PC-9 (cell line): ENCODE measurements at regions of chr4 and their contacts with region 1.

Region 1: DNA sequence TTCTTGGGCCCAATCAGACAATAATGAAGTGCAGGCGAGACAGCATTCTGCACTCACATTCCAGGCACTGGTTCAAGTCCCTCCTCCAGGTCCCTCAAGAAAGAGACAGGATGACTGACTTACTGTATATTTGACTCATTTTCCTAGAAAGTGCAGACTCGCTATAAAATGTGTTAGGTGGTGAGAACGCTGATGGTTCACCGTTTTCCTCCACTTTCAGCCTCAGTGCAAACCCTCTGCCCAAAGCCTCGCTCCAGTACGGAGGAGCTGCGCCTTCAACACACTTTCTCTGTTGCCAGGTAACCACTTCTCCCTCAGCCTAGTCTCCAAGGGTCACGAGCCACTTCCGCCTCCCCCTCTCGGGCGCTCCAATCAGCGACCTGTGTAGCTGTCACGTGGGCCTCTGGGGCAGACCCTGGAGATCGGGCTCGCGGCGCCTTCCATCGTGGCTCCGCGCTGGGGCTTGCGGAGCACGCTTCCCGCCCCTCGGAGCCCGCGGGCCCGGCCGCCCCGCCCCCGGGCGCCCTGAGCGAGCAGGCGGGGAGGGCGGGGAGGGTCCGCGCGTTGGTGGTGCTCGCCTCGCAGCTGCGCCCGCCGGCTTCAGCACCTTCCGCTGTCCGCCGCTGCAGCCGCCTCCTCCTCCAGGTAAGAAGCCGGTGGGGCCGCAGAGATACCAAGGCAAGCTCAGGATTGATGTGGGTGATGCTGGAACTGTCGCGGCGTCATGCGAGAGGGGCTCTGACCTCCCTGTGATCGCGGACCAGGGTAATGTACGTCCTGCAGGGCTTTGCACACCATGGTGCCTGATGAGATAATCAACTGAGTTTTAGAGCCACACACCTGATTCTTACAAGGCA is at the start of gene WDR17:
- DNase-seq: peak; percentile 66 to 78
- H3K4me3 ChIP-seq: peak within 1 kb of the TSS; percentile 74
- H3K27ac ChIP-seq: no peak within 1 kb of the TSS
- H3K4me1 ChIP-seq: peaks cover 9% of the 10 kb centered on the region
- H3K27me3 ChIP-seq: no peaks in the 10 kb centered on the region
- CTCF ChIP-seq: no peak
- total RNA-seq, gene WDR17: 2.2 and 2.3 TPM in 2 replicates

Region 2: DNA sequence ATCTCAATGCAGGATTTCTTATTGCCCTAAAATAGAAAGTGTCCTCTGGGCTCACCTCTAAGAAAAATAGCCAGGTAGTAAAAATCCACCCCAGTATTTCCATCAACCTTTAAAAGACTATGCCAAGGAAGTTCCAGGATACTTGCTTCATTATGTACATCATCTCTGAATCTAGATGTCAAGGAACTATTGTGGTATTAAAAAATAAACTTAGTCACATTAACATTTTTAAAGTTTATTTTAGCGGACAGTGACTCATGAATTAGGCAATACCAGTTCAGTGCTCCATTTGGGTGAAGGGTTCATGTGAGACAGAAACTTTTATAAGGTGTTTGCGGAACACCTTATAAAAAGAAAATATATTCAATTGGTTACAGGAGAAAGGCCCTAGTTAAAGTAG is 938.3 kb before region 1 on chr4:
- CTCF ChIA-PET with region 1: no interaction called
- POLR2A ChIA-PET with region 1: no interaction called
- intact Hi-C with region 1: no loop called
- DNase-seq: peak in 1 of 2 experiments; percentile 39
- H3K4me3 ChIP-seq: no peak overlapping the region
- H3K27ac ChIP-seq: peak overlapping the region; percentile 25; the same call in 1 of the 2 replicates
- H3K4me1 ChIP-seq: peaks cover 16% of the 10 kb centered on the region
- H3K27me3 ChIP-seq: no peaks in the 10 kb centered on the region
- CTCF ChIP-seq: no peak

Region 3: DNA sequence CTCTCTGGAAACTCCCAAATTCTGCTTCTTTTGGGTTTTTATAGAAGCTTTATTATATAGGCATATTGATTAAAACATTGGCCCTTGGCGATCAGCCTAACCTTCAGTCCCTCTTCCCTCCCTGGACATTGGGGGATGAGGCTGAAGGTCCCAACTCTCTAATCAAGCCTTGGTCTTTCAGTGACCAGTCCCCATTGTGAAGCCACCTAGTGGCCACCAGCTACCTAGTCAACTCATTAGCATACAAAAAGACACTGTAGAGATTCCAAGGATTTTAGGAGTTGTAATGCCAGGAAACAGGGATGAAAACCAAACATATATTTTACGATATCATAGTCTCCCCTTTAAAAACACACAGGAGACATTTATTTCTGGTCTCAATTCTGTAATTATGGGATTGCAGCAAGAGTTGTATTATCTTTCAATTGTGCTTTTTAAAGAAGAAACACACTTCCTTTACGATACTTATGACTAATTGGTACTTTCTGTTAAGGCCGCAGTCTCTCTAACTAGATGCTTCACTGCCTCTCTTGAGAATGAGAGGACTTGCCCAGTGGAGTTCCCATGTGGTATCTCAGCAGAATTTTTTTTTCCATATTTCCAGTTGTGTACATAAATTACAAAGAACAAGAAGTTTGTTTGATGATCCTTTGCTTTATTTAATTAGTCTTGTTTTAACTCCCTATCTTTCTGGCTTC is 58.2 kb after region 1 on chr4:
- CTCF ChIA-PET with region 1: interaction called, 14 read pairs
- POLR2A ChIA-PET with region 1: no interaction called
- intact Hi-C with region 1: no loop called
- DNase-seq: peak in 1 of 2 experiments; percentile 2
- H3K4me3 ChIP-seq: no peak overlapping the region
- H3K27ac ChIP-seq: no peak overlapping the region
- H3K4me1 ChIP-seq: no peaks in the 10 kb centered on the region
- H3K27me3 ChIP-seq: no peaks in the 10 kb centered on the region
- CTCF ChIP-seq: peak; percentile 67; the same call in 1 of the 2 replicates